Activated T-helper 2 cell treated with anti-CD3 and anti-CD28 coated beads, Interferon-gamma antibody, Interleukin-2, Interleukin-4, amounts not matched to agents 10 μg/mL and 5 μg/mL and 100 μg/mL, durations not matched to agents 14 hours and 24 hours and 36 hours (primary cell): ENCODE measurements at regions of chr20 and their contacts with region 1.

Region 1: DNA sequence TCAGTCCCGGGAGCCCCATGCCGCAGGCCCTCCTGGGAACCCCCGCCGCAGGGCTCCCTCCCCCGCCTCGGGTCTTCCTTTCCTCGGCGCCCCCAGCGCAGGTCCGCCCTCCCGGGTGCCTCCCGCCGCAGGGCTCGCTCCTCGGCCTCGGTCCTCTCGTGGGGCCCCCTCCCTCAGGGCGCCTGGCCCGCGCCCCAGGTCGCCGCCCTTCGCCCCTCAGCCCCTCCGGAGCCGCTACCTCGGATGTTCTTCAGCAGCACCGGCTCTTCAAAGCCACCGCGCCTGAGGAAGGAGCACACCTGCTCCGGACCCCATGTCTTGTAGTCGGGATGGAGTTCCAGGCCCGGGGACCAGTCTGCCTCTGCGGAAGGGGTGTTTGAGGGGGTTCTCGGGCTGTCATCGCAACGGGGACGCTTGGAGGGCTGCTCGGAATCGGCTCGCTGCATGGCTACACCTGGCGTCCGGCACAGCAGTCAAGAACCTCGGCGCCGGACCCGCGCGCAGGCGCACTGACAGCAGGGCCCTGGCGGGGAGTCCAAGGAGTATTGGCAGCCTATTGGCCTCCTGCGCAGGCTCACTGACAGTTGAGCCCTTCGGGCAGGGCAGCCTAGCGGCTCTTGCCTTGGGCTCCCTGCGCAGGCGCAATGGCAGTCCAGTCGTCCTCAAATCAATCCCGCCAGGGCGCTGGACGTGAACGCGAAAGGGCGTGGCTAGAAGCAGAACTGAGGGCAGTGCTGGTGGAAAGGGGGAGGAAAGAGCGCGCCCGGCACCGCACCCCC is at the start of gene SAMHD1:
- DNase-seq: peak; percentile 88
- H3K4me3 Mint-ChIP-seq: peak within 1 kb of the TSS; percentile 97
- H3K27ac Mint-ChIP-seq: peak within 1 kb of the TSS; percentile 95
- H3K4me1 Mint-ChIP-seq: peaks cover 37% of the 10 kb centered on the region
- H3K27me3 Mint-ChIP-seq: no peaks in the 10 kb centered on the region
- total RNA-seq, gene SAMHD1: 44.1 and 45.7 TPM in 2 replicates

Region 2: DNA sequence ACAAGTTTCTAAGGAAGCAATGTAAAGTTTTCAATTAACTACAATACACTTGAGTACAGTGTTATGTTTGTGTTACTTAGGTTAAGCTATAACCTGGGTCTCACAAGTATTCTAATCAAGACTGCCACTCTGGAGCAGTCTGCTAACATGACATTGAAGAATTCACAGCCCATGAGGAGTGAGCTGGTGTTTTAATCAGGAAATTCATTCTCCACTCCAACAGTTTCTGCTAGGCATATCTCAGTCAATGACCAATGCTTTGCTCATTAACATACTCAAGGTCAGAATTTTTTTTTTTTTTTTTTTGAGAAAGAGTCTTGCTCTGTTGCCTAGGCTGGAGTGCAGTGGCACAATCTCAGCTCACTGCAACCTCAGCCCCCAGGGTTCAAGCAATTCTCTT is 59.8 kb after region 1 on chr20:
- intact Hi-C with region 1: loop called (anchors 2 kb)
- DNase-seq: no peak
- H3K4me3 Mint-ChIP-seq: no peak overlapping the region
- H3K27ac Mint-ChIP-seq: no peak overlapping the region
- H3K4me1 Mint-ChIP-seq: peaks cover 23% of the 10 kb centered on the region
- H3K27me3 Mint-ChIP-seq: no peaks in the 10 kb centered on the region